ENCODE measurements at regions of chr2 and their contacts with region 1.

Region 1: GRCh38 chr2:102473020-102473419 is at the start of gene SLC9A4:
- DNase-seq: peak; percentile 28
- H3K4me3 Mint-ChIP-seq: no peak within 1 kb of the TSS
- H3K27ac Mint-ChIP-seq: no peak within 1 kb of the TSS
- H3K4me1 Mint-ChIP-seq: no peaks in the 10 kb centered on the region
- H3K27me3 Mint-ChIP-seq: peaks cover 51% of the 10 kb centered on the region
- total RNA-seq, gene SLC9A4: 0.10 TPM in 1 of 2 replicates, not detected in the other

Region 2: DNA sequence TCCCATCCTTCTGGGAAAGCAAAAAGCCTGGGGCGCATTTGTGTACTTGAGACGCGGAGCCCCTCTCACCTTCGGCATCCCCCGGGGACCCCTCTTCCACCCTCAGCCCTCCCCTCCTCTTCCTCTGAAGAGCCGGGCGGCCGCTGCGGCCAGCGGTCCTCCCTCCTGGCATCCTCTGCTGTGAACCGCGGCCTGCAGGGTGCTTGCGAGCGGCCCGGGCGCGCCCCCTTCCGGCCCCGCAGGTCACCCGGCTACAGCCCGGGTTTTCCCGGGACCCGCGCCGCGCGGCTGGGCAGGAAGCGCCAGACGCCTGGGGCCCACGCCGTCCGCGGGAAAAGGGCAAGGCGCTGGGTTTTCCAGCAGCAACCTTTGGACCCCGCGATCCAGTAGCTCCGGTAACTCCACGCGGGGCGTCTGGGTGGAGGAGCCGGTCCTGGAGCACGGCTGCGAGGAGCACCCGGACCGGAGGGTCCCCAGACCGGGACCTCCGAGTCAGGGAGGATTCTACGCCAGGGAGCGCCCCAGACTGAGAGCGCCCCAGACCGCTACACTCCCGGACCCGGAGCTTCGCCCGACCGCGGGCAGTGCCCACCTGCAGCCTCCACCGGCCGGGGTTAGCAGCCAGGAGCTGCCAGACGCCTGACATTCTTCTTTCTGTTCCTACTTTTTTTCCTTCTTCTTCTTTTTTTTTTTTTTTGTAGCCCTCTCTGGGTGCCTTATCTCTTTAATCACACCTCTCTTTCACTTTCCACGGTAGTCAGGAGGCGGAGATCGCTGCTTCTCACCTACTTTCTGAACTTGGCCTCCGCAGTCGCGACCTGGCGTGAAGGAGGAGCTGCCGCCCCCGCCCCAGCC is 117.3 kb before region 1 on chr2 and contains the start of gene IL18R1:
- intact Hi-C with region 1: no loop called
- DNase-seq: peak; percentile 71
- H3K4me3 Mint-ChIP-seq: peak within 1 kb of the TSS; percentile 97
- H3K27ac Mint-ChIP-seq: peak within 1 kb of the TSS; percentile 96
- H3K4me1 Mint-ChIP-seq: peaks cover 47% of the 10 kb centered on the region
- H3K27me3 Mint-ChIP-seq: no peaks in the 10 kb centered on the region
- total RNA-seq, gene IL18R1: 57.8 and 61.3 TPM in 2 replicates

Region 3: GRCh38 chr2:102592597-102592996 is 119.6 kb after region 1 on chr2:
- intact Hi-C with region 1: loop called (anchors 1 kb)
- DNase-seq: no peak
- H3K4me3 Mint-ChIP-seq: no peak overlapping the region
- H3K27ac Mint-ChIP-seq: no peak overlapping the region
- H3K4me1 Mint-ChIP-seq: no peaks in the 10 kb centered on the region
- H3K27me3 Mint-ChIP-seq: peaks cover 12% of the 10 kb centered on the region

Region 4: GRCh38 chr2:102615622-102616436 is 142.8 kb after region 1 on chr2:
- intact Hi-C with region 1: loop called (anchors 1 kb)
- DNase-seq: no peak
- H3K4me3 Mint-ChIP-seq: no peak overlapping the region
- H3K27ac Mint-ChIP-seq: no peak overlapping the region
- H3K4me1 Mint-ChIP-seq: peaks cover 9% of the 10 kb centered on the region
- H3K27me3 Mint-ChIP-seq: peaks cover 56% of the 10 kb centered on the region

Region 5: GRCh38 chr2:102806250-102806837 is 333.3 kb after region 1 on chr2:
- intact Hi-C with region 1: loop called (anchors 1 kb)
- DNase-seq: no peak
- H3K4me3 Mint-ChIP-seq: no peak overlapping the region
- H3K27ac Mint-ChIP-seq: no peak overlapping the region
- H3K4me1 Mint-ChIP-seq: peaks cover 9% of the 10 kb centered on the region
- H3K27me3 Mint-ChIP-seq: peaks cover 2% of the 10 kb centered on the region